AG04450 (cell line): ENCODE measurements at regions of chr3 and their contacts with region 1.

Region 1: GRCh38 chr3:183481582-183481981 is 53.2 kb upstream of the MCF2L2 start:
- DNase-seq: no peak
- H3K4me3 ChIP-seq: no peak overlapping the region
- H3K27ac ChIP-seq: no peak overlapping the region
- H3K27me3 ChIP-seq: peaks cover 3% of the 10 kb centered on the region
- CTCF ChIP-seq: no peak

Region 2: GRCh38 chr3:183468424-183468823 is 13.2 kb before region 1 on chr3:
- CTCF ChIA-PET with region 1: interaction called, 10 read pairs
- POLR2A ChIA-PET with region 1: no interaction called
- DNase-seq: no peak
- H3K4me3 ChIP-seq: no peak overlapping the region
- H3K27ac ChIP-seq: no peak overlapping the region
- H3K27me3 ChIP-seq: peaks cover 21% of the 10 kb centered on the region
- CTCF ChIP-seq: no peak

Region 3: DNA sequence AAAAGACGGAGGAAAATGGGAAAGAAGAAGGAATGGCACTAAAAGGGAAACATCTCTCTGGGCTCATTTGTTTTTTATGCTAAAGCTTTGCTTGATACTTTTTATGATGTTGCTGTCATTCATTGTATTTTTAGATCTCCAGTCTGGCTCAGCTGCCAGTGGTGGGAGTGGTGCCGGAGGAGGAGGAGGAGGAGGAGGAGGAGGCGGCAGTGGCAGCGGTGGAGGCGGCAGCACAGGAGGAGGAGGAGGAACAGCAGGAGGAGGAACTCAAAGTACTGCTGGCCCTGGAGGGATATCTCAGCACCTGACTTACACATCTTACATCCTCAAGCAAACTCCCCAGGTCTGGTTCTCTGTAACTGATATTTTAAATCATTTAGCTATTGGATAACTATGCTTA is 294.2 kb after region 1 on chr3:
- CTCF ChIA-PET with region 1: no interaction called
- POLR2A ChIA-PET with region 1: no interaction called
- DNase-seq: no peak
- H3K4me3 ChIP-seq: no peak overlapping the region
- H3K27ac ChIP-seq: no peak overlapping the region
- H3K27me3 ChIP-seq: no peaks in the 10 kb centered on the region
- CTCF ChIP-seq: no peak